ENCODE measurements at regions of chr1 and their contacts with region 1.

Region 1: DNA sequence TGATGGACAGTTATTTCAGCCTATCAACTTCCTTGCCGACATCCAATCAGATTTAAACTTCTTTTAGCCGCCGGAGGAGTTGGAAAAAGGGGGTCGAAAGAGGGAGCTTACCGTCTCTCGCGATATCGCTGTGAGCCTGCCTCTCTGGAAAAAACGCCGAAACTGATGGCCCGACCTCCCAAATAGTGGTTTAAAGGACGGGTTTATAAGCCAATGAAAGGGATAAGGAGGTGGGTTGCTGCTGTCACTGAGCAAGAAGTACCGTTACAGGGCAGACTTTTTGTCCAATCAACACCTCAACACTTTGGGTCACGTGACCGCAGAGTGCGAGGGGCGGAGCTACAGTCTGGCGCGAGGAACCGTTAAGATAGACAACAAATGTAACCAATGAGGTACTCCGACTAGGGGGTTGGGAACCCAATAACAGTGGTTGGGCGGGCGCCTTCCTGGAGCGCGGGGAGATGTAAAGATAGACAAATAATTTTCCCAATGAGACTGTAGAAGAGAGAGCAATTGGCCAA is at the start of gene RBM15:
- DNase-seq: peak; percentile 96

Region 2: DNA sequence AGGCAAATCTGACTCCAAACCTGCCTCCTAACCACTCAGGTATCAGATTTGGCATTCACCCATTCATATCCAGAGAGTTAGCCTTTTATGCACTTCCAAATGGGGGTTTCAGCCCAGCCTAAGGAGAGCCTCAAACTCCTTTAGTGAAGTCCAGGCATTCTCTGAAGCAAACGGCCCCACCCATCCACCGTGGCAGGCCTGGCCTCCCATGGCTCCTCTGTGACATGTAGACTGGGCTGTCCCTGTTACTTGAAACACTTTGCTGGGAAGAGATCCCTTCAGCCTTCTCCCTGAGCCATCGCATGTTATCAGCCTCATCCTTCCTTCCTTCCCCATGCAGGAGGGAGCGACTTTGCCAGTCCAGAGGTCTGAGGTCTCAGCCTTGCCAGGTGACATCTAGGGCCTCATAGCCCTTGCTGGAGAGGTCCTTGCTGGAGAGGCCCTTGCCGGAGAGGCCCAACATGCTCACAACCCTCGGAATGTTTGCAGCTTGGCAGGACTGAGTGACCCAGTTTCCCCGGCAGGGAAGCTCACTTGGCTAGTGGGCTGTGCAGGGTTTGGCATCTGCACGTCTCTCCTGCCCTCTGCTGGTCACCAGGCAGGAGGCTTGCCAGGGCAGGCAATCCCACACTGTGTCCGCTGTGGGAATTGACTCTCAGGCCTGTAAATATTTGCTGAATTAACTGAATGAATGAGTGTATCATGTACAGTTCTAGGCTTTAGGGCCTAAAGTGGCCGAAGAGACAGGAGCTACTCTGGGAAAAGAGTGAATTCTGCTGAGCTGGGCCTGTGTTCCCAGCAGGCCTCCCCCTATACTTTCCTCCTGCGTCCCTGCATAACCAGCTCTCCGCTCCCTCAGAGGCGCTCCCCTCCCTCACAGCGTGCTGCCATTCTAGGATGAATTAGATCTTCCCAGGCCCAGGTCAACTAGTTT is 26.5 kb before region 1 on chr1:
- CTCF ChIA-PET with region 1: interaction called, 9 read pairs
- POLR2A ChIA-PET with region 1: interaction called, 13 read pairs
- DNase-seq: peak; percentile 90

Region 3: DNA sequence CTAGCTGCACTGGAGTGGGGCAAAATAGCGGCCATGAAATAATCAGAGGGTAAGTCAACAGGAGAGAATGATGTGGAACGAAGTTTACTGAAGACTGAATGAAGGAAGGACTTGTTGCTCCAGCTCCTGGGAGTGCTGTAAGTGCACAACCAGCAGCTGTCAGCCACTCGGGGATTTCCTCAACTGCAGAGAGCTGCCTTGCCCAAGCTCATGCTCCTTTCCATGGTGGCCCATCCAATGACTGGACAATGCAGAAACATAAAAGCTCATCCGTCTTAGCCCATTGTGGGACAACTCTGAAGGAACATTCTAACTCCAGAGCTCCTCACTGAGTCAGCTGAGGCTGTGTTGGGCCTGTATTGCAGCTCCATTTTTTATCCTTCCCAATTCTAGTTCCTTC is 20.9 kb before region 1 on chr1:
- CTCF ChIA-PET with region 1: interaction called, 9 read pairs
- POLR2A ChIA-PET with region 1: interaction called, 10 read pairs
- DNase-seq: no peak

Region 4: DNA sequence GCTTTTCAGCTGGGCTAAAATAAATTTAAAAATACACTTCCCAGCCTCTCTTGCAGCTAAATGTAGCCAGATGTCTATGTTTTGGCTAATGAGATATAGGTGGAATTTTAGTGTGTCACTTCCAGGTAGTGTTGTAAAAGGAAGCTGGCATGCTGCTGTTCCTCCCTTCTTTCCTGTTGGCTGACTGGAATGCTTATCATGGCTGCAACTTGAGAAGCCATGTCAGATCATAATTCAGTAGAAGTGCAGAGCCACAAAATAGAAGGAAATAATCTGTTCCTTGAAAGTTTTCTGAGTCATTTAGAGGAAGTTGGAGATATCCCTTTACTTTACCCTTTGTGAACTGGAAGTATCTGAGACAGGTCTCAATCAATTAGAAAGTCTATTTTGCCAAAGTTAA is 10.7 kb before region 1 on chr1:
- CTCF ChIA-PET with region 1: interaction called, 3 read pairs
- POLR2A ChIA-PET with region 1: interaction called, 23 read pairs
- DNase-seq: no peak

Region 5: DNA sequence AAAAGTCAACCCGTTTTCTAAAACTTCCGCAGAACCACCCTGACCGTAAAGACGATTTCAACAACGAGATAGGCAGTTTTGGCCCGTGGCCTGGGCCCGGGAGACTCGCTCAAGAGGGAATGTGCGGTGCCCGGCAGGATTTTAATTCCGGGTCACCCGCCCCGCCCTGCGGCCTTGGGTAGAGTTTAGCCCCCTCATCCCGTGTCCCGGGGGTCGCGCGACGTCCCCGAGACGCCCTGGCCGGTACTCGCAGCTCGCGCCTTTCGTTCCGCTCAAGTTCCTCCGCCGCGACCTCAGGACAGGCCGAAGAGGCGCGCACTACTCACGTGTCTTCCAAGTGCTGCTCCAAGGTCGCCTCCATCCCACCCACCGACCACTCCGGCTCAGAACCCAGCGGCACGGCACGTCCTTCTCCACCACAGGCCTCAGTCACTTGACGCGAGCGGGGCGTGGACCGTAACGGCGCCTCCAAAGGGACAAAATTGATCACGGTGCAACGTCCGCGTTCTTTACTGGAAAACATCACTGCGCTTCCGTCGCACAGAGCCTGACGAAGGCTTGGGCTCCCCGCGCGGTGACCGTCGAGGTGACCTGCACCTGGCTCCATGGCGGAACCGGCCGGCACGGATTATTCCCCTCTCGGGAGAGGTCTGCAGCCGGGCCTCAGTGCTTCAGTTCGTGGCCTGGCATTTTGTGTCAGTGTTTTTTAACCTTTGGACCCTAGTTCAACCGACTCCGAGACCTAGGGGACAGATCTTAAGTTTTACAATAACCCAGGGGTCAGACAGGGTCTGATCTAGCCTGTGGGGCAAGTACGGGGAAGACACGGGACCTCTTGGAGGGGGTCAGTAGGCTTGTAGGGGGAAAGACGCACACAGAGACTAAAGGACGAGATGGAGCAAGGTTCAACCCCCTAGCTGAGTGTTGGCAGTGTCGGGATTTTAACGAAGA is 68.6 kb after region 1 on chr1 and contains the start of gene LAMTOR5:
- CTCF ChIA-PET with region 1: interaction called, 3 read pairs
- POLR2A ChIA-PET with region 1: interaction called, 24 read pairs
- DNase-seq: peak; percentile 82

Region 6: GRCh38 chr1:110466646-110467280 is 127.8 kb after region 1 on chr1:
- CTCF ChIA-PET with region 1: no interaction called
- POLR2A ChIA-PET with region 1: no interaction called
- DNase-seq: no peak